A673 (cell line): ENCODE measurements at regions of chr9 and their contacts with region 1.

Region 1: GRCh38 chr9:6944093-6944551 is 186.3 kb downstream of the KDM4C start:
- DNase-seq: peak; percentile 95
- H3K4me3 ChIP-seq: no peak overlapping the region
- H3K27ac ChIP-seq: no peak overlapping the region
- H3K4me1 ChIP-seq: peaks cover 32% of the 10 kb centered on the region
- H3K27me3 ChIP-seq: no peaks in the 10 kb centered on the region
- CTCF ChIP-seq: peak; percentile 59

Region 2: GRCh38 chr9:6968271-6968670 is 24.1 kb after region 1 on chr9:
- CTCF ChIA-PET with region 1: no interaction called
- POLR2A ChIA-PET with region 1: no interaction called
- intact Hi-C with region 1: no loop called
- DNase-seq: no peak
- H3K4me3 ChIP-seq: no peak overlapping the region
- H3K27ac ChIP-seq: no peak overlapping the region
- H3K4me1 ChIP-seq: peaks cover 14% of the 10 kb centered on the region
- H3K27me3 ChIP-seq: no peaks in the 10 kb centered on the region
- CTCF ChIP-seq: no peak

Region 3: GRCh38 chr9:7368410-7369292 is 424.5 kb after region 1 on chr9:
- CTCF ChIA-PET with region 1: no interaction called
- POLR2A ChIA-PET with region 1: no interaction called
- intact Hi-C with region 1: loop called (anchors 5 kb)
- DNase-seq: peak; percentile 96
- H3K4me3 ChIP-seq: no peak overlapping the region
- H3K27ac ChIP-seq: peak overlapping the region; percentile 76
- H3K4me1 ChIP-seq: peaks cover 28% of the 10 kb centered on the region
- H3K27me3 ChIP-seq: no peaks in the 10 kb centered on the region
- CTCF ChIP-seq: no peak